Activated naive CD4-positive, alpha-beta T cell treated with anti-CD3 and anti-CD28 coated beads for 36 hours (primary cell): ENCODE measurements at regions of chr2 and their contacts with region 1.

Region 1: GRCh38 chr2:24421668-24422067 is 61.3 kb upstream of the ITSN2 start:
- DNase-seq: peak; percentile 84
- H3K4me3 Mint-ChIP-seq: no peak overlapping the region
- H3K27ac Mint-ChIP-seq: no peak overlapping the region
- H3K4me1 Mint-ChIP-seq: no peaks in the 10 kb centered on the region
- H3K27me3 Mint-ChIP-seq: no peaks in the 10 kb centered on the region

Region 2: DNA sequence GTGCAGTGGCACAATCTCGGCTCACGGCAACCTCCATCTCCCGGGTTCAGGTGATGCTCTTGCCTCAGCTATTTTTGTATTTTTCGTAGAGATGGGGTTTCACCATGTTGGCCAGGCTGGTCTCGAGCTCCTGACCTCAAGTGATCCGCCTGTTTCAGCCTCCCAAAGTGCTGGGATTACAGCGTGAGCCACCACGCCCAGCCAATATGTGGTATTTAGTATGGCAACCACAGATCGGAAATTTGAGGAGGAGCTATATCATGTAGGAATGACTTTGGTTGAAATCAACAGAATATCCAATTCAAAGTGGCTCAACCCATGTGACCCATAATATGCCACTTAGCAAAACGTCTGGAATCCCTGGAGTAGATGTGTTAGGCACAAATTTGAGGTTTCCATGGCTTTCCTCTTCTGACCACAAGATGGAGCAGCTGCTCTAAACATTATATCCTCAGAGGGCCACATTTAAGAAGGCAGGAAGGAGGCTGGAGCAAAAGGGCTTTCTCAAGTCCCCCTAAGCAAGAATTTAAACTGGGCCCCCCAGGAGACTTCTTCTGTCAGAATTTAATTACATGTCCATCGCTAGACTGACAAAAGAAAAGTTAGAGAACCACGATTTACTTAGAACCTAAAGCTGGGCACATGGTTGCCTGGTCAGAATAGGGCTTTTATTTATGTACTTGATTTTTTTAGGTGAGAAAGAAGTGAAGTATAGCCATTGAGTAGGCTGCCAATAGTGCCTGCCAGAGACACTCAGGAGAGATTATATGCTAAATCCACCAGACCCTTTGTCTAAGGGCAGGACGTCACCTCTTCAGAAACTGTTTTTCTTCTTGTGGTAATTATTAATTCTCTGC is 11.7 kb before region 1 on chr2:
- CTCF ChIA-PET with region 1: interaction called, 13 read pairs
- intact Hi-C with region 1: no loop called
- DNase-seq: peak; percentile 56
- H3K4me3 Mint-ChIP-seq: no peak overlapping the region
- H3K27ac Mint-ChIP-seq: no peak overlapping the region
- H3K4me1 Mint-ChIP-seq: no peaks in the 10 kb centered on the region
- H3K27me3 Mint-ChIP-seq: peaks cover 4% of the 10 kb centered on the region

Region 3: GRCh38 chr2:24435391-24436316 is 14.0 kb after region 1 on chr2:
- CTCF ChIA-PET with region 1: interaction called, 29 read pairs
- intact Hi-C with region 1: no loop called
- DNase-seq: no peak
- H3K4me3 Mint-ChIP-seq: no peak overlapping the region
- H3K27ac Mint-ChIP-seq: no peak overlapping the region
- H3K4me1 Mint-ChIP-seq: no peaks in the 10 kb centered on the region
- H3K27me3 Mint-ChIP-seq: no peaks in the 10 kb centered on the region

Region 4: GRCh38 chr2:24513281-24514071 is 91.8 kb after region 1 on chr2:
- CTCF ChIA-PET with region 1: no interaction called
- intact Hi-C with region 1: no loop called
- DNase-seq: no peak
- H3K4me3 Mint-ChIP-seq: no peak overlapping the region
- H3K27ac Mint-ChIP-seq: no peak overlapping the region
- H3K4me1 Mint-ChIP-seq: peaks cover 54% of the 10 kb centered on the region
- H3K27me3 Mint-ChIP-seq: no peaks in the 10 kb centered on the region

Region 5: DNA sequence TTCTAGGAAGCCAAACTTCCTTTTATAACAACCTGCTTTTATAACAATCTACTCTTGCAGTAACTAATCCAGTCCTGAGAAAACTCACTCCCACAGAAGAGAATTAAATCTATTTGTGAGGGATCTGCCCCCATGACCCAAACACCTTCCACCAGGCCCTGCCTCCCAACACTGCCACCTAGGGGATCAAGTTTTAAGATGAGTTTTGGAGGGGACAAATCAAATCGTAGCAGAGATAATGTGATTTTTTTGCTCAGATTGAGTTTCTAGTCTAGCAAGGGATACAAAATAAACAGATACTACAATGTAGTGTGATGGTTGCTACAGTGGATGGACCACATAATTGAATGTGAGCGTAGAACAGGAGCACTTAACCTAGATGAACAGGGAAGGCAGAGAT is 121.6 kb after region 1 on chr2:
- CTCF ChIA-PET with region 1: no interaction called
- intact Hi-C with region 1: loop called (anchors 2 kb)
- DNase-seq: no peak
- H3K4me3 Mint-ChIP-seq: no peak overlapping the region
- H3K27ac Mint-ChIP-seq: no peak overlapping the region
- H3K4me1 Mint-ChIP-seq: peaks cover 12% of the 10 kb centered on the region
- H3K27me3 Mint-ChIP-seq: no peaks in the 10 kb centered on the region

Region 6: GRCh38 chr2:24822049-24822706 is 400.5 kb after region 1 on chr2:
- CTCF ChIA-PET with region 1: interaction called, 32 read pairs
- intact Hi-C with region 1: loop called (anchors 1 kb)
- DNase-seq: no peak
- H3K4me3 Mint-ChIP-seq: no peak overlapping the region
- H3K27ac Mint-ChIP-seq: no peak overlapping the region
- H3K4me1 Mint-ChIP-seq: peaks cover 14% of the 10 kb centered on the region
- H3K27me3 Mint-ChIP-seq: no peaks in the 10 kb centered on the region

Region 7: DNA sequence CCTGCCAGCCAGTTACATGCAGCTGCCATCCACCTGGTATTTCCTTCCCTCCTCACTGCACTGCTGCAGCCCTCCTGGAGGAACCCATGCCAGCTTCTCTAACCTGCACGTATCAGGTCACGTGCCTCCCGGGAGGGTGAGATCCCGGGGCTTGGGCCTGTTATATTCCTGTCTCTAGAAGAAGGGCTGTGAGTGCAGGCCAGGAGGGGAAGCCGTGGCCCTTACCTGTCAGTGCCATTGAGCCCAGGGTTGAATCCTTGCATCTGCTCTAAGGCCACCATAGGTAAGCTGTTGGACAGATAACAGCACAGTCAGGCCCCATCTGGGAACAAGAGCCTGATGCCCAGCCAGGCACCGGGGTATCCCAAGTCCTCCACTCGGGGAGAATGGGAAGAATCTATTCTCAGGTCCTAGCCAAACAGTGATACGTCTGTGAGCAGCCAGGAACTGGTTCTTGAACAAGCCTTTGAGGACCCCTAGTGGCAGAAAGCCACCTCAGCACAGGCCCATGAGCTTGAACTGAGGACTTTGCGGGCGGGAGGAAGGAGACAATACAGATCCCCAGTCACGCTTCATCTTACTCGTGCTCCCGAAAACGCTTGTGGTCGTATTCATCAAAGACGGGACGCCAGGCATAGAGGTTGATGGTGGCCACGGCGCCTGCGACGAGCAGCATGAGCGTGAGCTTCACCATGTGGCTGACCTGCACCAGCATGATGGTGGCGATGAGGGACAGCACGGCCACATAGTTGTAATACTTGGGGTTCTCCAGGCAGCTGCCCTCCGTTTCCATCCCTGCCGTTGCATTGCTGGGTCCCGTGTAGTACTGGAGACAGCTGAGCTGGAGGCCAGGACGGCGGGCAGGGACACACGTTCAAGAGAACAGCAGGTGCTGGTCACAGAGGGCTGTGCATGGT is 405.9 kb after region 1 on chr2:
- CTCF ChIA-PET with region 1: interaction called, 32 read pairs
- intact Hi-C with region 1: loop called (anchors 1 kb)
- DNase-seq: peak; percentile 85
- H3K4me3 Mint-ChIP-seq: no peak overlapping the region
- H3K27ac Mint-ChIP-seq: no peak overlapping the region
- H3K4me1 Mint-ChIP-seq: peaks cover 17% of the 10 kb centered on the region
- H3K27me3 Mint-ChIP-seq: no peaks in the 10 kb centered on the region